Activated B cell treated with CpG ODN at 0.5 μM for 24 hours (primary cell): ENCODE measurements at regions of chr22 and their contacts with region 1.

Region 1: DNA sequence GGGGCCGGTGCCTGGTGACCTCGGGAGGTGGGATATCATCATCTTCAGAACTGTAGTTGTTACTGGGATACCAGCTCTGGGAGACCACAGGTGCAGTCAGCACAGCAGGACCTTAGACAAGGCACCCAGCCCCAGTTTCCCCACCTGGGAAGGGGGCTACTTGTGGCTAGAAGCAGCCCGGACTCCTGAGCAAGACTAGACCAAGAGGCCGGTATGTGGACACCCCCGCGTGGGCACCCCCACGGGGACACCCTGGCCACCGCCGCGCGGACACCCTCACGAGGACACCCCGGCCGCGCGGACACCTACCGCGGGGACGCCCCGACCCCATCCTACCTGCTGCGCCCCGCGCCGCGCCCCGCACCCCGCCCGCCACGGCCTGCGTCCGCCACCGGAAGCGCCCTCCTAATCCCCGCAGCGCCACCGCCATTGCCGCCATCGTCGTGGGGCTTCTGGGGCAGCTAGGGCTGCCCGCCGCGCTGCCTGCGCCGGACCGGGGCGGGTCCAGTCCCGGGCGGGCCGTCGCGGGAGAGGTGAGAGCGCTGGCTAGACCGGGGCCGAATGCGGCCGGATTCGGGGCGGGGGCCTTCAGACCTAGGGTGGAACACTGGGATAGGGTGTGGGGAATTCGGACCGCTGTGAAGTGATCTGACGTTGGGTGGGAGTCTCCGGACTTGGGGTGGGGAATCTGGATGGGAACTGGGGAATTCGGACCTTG is at the starts of genes COMT and TXNRD2:
- DNase-seq: peak; percentile 76
- ATAC-seq: peak; percentile 85
- H3K4me3 Mint-ChIP-seq: peak within 1 kb of the TSS; percentile 94
- H3K27ac Mint-ChIP-seq: peak within 1 kb of the TSS; percentile 94
- H3K4me1 Mint-ChIP-seq: peaks cover 46% of the 10 kb centered on the region
- H3K27me3 Mint-ChIP-seq: no peaks in the 10 kb centered on the region
- CTCF ChIP-seq: no peak
- total RNA-seq, gene COMT: 40.6 and 49.5 TPM in 2 replicates
- total RNA-seq, gene TXNRD2: 24.4 and 31.2 TPM in 2 replicates

Region 2: DNA sequence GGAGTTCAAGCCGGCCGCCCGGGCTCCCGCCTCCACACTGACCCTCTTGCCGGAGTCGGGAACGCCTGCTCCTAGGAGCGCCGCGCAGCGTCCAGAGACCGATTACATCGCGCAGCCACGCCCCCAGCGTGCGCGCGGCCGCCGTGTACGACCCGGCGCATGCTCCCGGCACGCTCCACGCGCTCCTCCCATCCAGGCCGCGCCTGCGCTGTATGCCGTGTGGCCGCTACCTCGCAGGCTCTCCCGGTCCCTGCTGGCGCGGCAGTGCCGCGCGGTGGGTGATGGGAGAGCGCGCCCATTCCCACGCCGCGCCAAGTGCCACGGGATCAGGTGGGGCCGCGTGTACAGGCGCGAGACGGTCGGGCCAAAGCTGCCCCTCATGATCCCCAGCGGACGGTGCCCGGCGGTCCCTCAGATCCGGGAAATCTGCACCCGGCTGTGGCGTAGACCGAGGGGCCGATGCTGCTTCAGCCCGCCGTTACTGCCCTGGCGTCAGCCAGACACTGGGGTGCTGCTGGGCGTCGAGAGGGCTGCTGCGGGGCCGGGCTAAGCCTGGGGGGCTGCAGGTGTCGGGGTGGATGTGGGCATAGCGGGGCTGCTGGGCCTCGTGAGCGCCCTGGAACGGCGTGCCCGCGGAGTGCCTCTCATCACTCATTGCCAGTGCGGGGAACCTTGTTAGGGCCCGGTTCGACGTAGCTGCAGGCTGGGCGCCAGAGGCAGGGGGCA is 86.6 kb before region 1 on chr22 and contains the starts of genes GNB1L and RTL10:
- CTCF ChIA-PET with region 1: no interaction called
- POLR2A ChIA-PET with region 1: no interaction called
- intact Hi-C with region 1: loop called (anchors 2 kb)
- DNase-seq: peak; percentile 98
- ATAC-seq: peak; percentile 92
- H3K4me3 Mint-ChIP-seq: peak within 1 kb of the TSS; percentile 91
- H3K27ac Mint-ChIP-seq: peak within 1 kb of the TSS; percentile 88
- H3K4me1 Mint-ChIP-seq: peaks cover 39% of the 10 kb centered on the region
- H3K27me3 Mint-ChIP-seq: no peaks in the 10 kb centered on the region
- CTCF ChIP-seq: no peak
- total RNA-seq, gene GNB1L: 5.8 and 6.3 TPM in 2 replicates
- total RNA-seq, gene RTL10: 9.1 and 12.1 TPM in 2 replicates

Region 3: GRCh38 chr22:19909350-19910179 is 32.0 kb before region 1 on chr22:
- CTCF ChIA-PET with region 1: no interaction called
- POLR2A ChIA-PET with region 1: no interaction called
- intact Hi-C with region 1: loop called (anchors 2 kb)
- DNase-seq: peak; percentile 69
- ATAC-seq: peak; percentile 91
- H3K4me3 Mint-ChIP-seq: no peak overlapping the region
- H3K27ac Mint-ChIP-seq: no peak overlapping the region
- H3K4me1 Mint-ChIP-seq: peaks cover 2% of the 10 kb centered on the region
- H3K27me3 Mint-ChIP-seq: no peaks in the 10 kb centered on the region
- CTCF ChIP-seq: no peak

Region 4: GRCh38 chr22:19959043-19959586 is 17.6 kb after region 1 on chr22:
- CTCF ChIA-PET with region 1: interaction called, 10 read pairs
- POLR2A ChIA-PET with region 1: interaction called, 4 read pairs
- intact Hi-C with region 1: no loop called
- DNase-seq: no peak
- ATAC-seq: no peak
- H3K4me3 Mint-ChIP-seq: no peak overlapping the region
- H3K27ac Mint-ChIP-seq: no peak overlapping the region
- H3K4me1 Mint-ChIP-seq: peaks cover 18% of the 10 kb centered on the region
- H3K27me3 Mint-ChIP-seq: no peaks in the 10 kb centered on the region
- CTCF ChIP-seq: no peak

Region 5: GRCh38 chr22:20052309-20053259 is 111.1 kb after region 1 on chr22:
- CTCF ChIA-PET with region 1: no interaction called
- POLR2A ChIA-PET with region 1: interaction called, 11 read pairs
- intact Hi-C with region 1: no loop called
- DNase-seq: no peak
- ATAC-seq: no peak
- H3K4me3 Mint-ChIP-seq: no peak overlapping the region
- H3K27ac Mint-ChIP-seq: no peak overlapping the region
- H3K4me1 Mint-ChIP-seq: no peaks in the 10 kb centered on the region
- H3K27me3 Mint-ChIP-seq: no peaks in the 10 kb centered on the region
- CTCF ChIP-seq: no peak